Panc1 (cell line): ENCODE measurements at regions of chr14 and their contacts with region 1.

Region 1: GRCh38 chr14:73472185-73473114 is 14.1 kb upstream of the NUMB start:
- DNase-seq: no peak
- ATAC-seq: peak; percentile 89
- H3K4me3 ChIP-seq: no peak overlapping the region
- H3K27ac ChIP-seq: no peak overlapping the region
- H3K4me1 ChIP-seq: no peaks in the 10 kb centered on the region
- H3K27me3 ChIP-seq: no peaks in the 10 kb centered on the region
- CTCF ChIP-seq: peak; percentile 71

Region 2: DNA sequence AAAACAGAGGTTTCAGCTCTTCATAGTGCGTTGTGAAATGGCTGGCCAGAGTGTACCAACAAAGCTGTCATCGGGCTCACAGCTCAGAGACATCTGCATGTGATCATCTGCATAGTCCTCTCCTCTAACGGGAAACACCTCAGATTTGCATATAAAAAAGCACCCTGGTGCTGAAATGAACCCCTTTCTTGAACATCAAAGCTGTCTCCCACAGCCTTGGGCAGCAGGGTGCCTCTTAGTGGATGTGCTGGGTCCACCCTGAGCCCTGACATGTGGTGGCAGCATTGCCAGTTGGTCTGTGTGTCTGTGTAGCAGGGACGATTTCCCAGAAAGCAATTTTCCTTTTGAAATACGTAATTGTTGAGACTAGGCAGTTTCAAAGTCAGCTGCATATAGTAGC is 249.4 kb before region 1 on chr14:
- CTCF ChIA-PET with region 1: interaction called, 15 read pairs
- POLR2A ChIA-PET with region 1: no interaction called
- in situ Hi-C with region 1: no loop called
- intact Hi-C with region 1: no loop called
- DNase-seq: no peak
- ATAC-seq: no peak
- H3K4me3 ChIP-seq: no peak overlapping the region
- H3K27ac ChIP-seq: peak overlapping the region; percentile 29; the same call in 1 of the 2 replicates
- H3K4me1 ChIP-seq: peaks cover 11% of the 10 kb centered on the region
- H3K27me3 ChIP-seq: no peaks in the 10 kb centered on the region
- CTCF ChIP-seq: no peak

Region 3: DNA sequence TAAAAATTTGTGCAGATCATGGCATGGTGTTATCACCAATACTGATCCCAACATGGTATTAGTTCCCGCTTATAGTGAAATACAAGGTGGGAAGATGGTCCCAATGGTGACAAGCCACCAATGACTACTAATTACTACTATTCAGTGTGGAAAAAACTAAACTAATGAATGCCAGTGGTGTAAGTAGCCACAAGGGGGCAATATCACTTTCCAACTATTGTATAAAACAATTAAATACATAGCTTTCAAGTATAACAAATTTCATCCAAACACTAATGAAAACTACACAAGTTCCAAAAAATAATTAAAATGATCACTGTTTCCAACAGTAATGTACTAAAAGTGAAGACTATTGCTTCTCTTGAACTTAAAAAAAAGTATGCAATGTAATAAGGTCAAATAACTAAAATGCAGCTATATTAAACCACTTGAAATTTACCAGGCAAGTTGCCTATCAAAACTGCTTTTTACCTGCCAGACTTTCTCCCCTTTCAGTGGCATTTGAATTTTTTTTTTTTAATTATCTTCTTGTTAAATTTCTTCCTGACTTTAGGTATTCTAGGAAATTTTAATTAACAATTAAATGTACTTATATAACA is 177.2 kb before region 1 on chr14:
- CTCF ChIA-PET with region 1: interaction called, 28 read pairs
- POLR2A ChIA-PET with region 1: no interaction called
- in situ Hi-C with region 1: no loop called
- intact Hi-C with region 1: loop called (anchors 1 kb)
- DNase-seq: no peak
- ATAC-seq: peak; percentile 66; the same call in 1 of the 2 replicates
- H3K4me3 ChIP-seq: no peak overlapping the region
- H3K27ac ChIP-seq: no peak overlapping the region
- H3K4me1 ChIP-seq: no peaks in the 10 kb centered on the region
- H3K27me3 ChIP-seq: no peaks in the 10 kb centered on the region
- CTCF ChIP-seq: peak; percentile 67

Region 4: GRCh38 chr14:73443758-73444157 is 28.7 kb before region 1 on chr14:
- CTCF ChIA-PET with region 1: interaction called, 4 read pairs
- POLR2A ChIA-PET with region 1: interaction called, 11 read pairs
- in situ Hi-C with region 1: no loop called
- intact Hi-C with region 1: no loop called
- DNase-seq: no peak
- ATAC-seq: no peak
- H3K4me3 ChIP-seq: no peak overlapping the region
- H3K27ac ChIP-seq: no peak overlapping the region
- H3K4me1 ChIP-seq: no peaks in the 10 kb centered on the region
- H3K27me3 ChIP-seq: no peaks in the 10 kb centered on the region
- CTCF ChIP-seq: no peak

Region 5: GRCh38 chr14:73610687-73611086 is 138.2 kb after region 1 on chr14:
- CTCF ChIA-PET with region 1: no interaction called
- POLR2A ChIA-PET with region 1: no interaction called
- in situ Hi-C with region 1: no loop called
- intact Hi-C with region 1: no loop called
- DNase-seq: no peak
- ATAC-seq: no peak
- H3K4me3 ChIP-seq: no peak overlapping the region
- H3K27ac ChIP-seq: no peak overlapping the region
- H3K4me1 ChIP-seq: 0 out of 2 replicates have a peak, but pooled peaks cover 2% of the 10 kb centered on the region
- H3K27me3 ChIP-seq: no peaks in the 10 kb centered on the region
- CTCF ChIP-seq: no peak

Region 6: GRCh38 chr14:74133833-74134481 is 661.5 kb after region 1 on chr14:
- CTCF ChIA-PET with region 1: no interaction called
- POLR2A ChIA-PET with region 1: no interaction called
- in situ Hi-C with region 1: no loop called
- intact Hi-C with region 1: no loop called
- DNase-seq: no peak
- ATAC-seq: no peak
- H3K4me3 ChIP-seq: no peak overlapping the region
- H3K27ac ChIP-seq: no peak overlapping the region
- H3K4me1 ChIP-seq: no peaks in the 10 kb centered on the region
- H3K27me3 ChIP-seq: no peaks in the 10 kb centered on the region
- CTCF ChIP-seq: no peak